Left ventricle myocardium superior (tissue), 1 donor: ENCODE measurements at regions of chr3 and their contacts with region 1.

Region 1: GRCh38 chr3:153043729-153044328 is 118.2 kb upstream of the RAP2B start:
- DNase-seq: no peak
- ATAC-seq: peak; percentile 33

Region 2: DNA sequence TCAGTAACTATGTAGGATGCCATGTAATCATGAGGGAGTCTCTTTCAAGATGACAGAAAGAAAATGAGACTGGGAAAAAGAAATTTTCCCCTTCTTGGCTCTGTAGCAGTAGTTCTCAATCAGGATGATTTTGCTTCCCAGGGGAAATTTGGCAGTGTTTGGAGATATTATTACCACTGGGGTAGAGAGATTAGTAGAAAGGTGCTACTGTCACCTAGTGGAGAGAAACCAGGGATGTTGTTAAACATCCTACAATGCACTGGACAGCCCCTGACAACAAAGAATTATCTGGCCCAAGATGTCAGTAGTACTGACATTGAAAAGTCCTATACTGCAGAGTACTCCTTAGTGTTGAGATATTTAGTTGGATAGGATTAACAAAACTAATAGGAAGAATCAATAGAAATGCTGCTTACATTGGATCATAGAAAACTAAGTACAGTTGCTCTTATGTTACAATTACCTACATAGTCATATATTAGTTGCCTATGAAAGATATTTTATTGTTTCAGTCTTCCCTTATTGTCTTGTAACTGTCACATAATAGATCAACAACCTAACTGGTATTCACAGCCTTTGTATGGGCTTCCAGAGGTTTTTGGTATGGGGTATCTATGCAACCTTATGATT is 551.5 kb after region 1 on chr3:
- intact Hi-C with region 1: loop called (anchors 10 kb)
- DNase-seq: no peak
- ATAC-seq: no peak

Region 3: GRCh38 chr3:153768561-153769469 is 725.0 kb after region 1 on chr3:
- intact Hi-C with region 1: loop called (anchors 5 kb)
- DNase-seq: no peak
- ATAC-seq: peak; percentile 74